AG04450 (cell line): ENCODE measurements at regions of chr1 and their contacts with region 1.

Region 1: GRCh38 chr1:65174585-65174984 is 26.6 kb downstream of the AK4 start:
- DNase-seq: peak; percentile 29
- H3K4me3 ChIP-seq: no peak overlapping the region
- H3K27ac ChIP-seq: no peak overlapping the region
- H3K27me3 ChIP-seq: no peaks in the 10 kb centered on the region
- CTCF ChIP-seq: no peak

Region 2: GRCh38 chr1:64940025-64940424 is 234.6 kb before region 1 on chr1:
- CTCF ChIA-PET with region 1: no interaction called
- POLR2A ChIA-PET with region 1: no interaction called
- DNase-seq: no peak
- H3K4me3 ChIP-seq: no peak overlapping the region
- H3K27ac ChIP-seq: no peak overlapping the region
- H3K27me3 ChIP-seq: no peaks in the 10 kb centered on the region
- CTCF ChIP-seq: no peak

Region 3: DNA sequence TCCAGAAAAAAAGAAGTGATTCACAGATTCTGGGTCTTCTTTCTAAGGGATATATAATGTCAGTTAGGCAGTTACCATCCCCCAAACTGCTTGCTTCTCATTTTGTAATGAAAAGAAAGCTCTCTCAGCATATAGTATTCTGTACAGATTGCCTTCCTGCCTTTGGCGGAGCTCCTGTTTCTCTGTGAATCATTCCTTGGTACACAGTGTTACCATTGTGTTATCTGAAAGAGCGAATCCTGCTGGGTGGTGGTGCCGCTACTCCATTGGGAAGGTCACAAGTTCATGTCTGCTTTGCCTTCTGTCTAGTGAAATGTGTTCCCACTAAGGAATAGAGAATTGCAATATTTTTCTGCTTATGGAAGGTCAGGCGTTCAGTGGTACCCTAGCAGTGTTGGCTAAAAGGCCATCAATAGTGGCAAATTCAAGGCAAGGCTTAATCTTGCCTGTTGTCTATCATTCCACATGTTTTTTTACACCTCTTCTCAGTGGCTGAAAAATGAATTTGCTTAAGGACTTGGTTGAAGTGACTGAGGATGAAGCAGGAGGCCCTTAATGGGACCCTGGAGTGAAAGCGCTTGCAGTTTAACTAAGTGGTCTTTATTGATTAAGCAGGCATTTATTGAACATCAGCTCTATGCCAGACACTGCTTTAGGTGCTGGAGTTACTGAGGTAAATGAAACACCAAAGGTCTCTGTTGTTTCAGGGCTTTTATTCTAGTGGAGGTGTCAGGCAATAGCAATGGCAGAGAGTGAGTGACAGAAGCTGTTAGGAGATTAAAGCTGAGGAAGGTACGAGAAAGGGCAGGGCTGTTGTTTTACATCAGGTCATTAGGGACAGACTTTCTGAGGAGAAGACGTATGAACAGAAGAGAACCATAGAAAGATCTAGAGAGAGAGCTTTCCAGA is 804.8 kb after region 1 on chr1:
- CTCF ChIA-PET with region 1: interaction called, 14 read pairs
- POLR2A ChIA-PET with region 1: no interaction called
- DNase-seq: no peak
- H3K4me3 ChIP-seq: no peak overlapping the region
- H3K27ac ChIP-seq: no peak overlapping the region
- H3K27me3 ChIP-seq: no peaks in the 10 kb centered on the region
- CTCF ChIP-seq: no peak